Breast epithelium (tissue), 4 donors: ENCODE measurements at regions of chr16 and their contacts with region 1.

Region 1: GRCh38 chr16:6177616-6178180 is 1080.1 kb upstream of the EEF2KMT start:
- DNase-seq: no peak
- H3K4me3 ChIP-seq: no peak overlapping the region
- H3K27ac ChIP-seq: no peak overlapping the region
- H3K4me1 ChIP-seq: no peaks in the 10 kb centered on the region
- H3K27me3 ChIP-seq: no peaks in the 10 kb centered on the region
- CTCF ChIP-seq: no peak
- POLR2A ChIP-seq: no peak

Region 2: DNA sequence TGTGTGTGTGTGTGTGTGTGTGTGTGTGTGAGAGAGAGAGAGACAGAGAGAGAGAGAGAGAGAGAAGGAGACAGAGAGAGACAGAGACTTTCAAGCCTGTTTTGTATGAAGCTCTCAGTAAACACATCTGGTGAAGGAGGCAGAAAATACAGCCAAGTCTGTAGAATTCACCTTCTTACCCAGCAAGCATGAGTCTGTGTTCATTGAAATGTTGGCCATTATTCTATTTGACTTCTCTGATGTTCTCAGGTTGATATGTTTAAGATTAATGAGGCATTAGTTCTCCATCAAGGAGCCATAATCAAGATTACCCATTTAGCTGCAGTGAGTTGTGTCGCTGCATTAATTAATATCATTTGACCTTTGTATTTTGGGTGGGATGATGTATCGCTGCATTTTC is 184.3 kb before region 1 on chr16:
- intact Hi-C with region 1: no loop called
- DNase-seq: no peak
- H3K4me3 ChIP-seq: no peak overlapping the region
- H3K27ac ChIP-seq: no peak overlapping the region
- H3K4me1 ChIP-seq: no peaks in the 10 kb centered on the region
- H3K27me3 ChIP-seq: no peaks in the 10 kb centered on the region
- CTCF ChIP-seq: no peak
- POLR2A ChIP-seq: no peak

Region 3: DNA sequence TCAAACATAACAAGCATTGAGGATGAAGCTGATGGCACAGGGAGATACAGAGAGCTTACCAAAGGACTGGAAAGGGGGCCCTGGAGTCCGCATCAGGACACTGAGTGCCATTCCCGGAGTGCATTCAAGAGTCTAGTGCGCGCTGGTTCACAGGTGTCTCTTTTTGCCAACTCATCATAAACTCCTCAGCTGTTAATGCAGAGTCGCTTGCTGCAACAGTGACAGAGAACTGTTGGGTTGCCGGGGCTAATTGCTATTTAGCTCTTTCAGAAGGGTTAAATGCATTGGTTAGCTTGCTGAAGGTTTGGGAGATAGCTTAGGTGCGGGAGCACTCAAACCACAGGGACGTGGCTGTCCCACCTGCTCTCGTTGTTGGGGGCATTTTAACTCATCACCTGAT is 11.5 kb after region 1 on chr16:
- intact Hi-C with region 1: loop called (anchors 1 kb)
- DNase-seq: no peak
- H3K4me3 ChIP-seq: no peak overlapping the region
- H3K27ac ChIP-seq: no peak overlapping the region
- H3K4me1 ChIP-seq: no peaks in the 10 kb centered on the region
- H3K27me3 ChIP-seq: no peaks in the 10 kb centered on the region
- CTCF ChIP-seq: no peak
- POLR2A ChIP-seq: no peak

Region 4: DNA sequence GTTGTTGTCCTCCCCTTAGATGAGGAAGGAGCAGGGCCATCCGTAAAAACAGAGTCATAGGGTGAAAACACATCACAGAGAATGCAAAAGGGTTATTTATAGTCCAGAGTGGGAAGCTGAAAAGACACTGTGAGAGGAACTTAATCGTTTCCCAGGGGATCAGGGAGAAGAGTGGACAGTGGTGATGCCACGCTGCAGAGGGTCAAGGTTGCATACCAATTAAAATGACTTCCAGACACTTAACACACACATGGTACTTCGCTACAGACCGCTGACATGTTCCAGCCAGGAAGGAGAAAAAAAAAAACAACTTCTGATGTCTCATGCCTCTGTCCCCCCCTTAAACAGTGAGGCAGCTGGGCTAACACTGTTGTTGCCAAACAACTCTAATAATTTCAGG is 441.2 kb after region 1 on chr16:
- intact Hi-C with region 1: no loop called
- DNase-seq: no peak
- H3K4me3 ChIP-seq: no peak overlapping the region
- H3K27ac ChIP-seq: no peak overlapping the region
- H3K4me1 ChIP-seq: no peaks in the 10 kb centered on the region
- H3K27me3 ChIP-seq: no peaks in the 10 kb centered on the region
- CTCF ChIP-seq: no peak
- POLR2A ChIP-seq: no peak